Gastrocnemius medialis (tissue), 4 donors: ENCODE measurements at regions of chr4 and their contacts with region 1.

Region 1: DNA sequence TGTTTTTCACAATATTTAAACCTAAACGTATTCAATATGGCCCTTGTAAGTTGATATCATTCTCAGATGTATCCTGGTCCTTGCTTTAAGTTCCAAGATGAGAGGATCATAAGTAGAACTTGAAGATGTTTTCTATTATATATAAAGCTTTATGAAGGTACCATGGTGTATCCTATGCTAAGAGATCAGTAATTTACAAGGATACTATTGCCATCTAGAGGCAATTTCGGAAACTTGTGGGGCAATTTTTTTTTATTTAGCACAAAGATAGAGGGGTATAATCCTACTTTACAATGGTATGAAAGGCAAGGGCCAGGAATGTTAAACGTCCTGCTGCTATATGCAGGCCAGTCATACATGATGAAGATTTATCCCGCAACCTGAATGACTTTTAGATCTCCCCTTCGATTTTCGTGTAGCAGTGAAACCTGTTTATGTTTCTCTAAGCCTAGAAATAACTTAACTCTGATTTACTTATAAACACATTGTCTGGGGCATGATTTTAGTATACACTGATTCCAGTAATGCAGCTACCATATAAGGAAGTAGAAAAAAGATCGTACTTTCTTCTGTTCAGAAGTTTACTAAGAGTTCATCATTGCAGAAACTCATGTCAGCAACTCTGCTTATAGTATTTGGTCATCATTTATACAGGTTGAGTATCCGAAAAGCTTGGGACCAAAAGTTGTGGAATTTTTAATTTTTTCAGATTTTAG is 2.6 kb downstream of the SLC25A31 start:
- DNase-seq: no peak
- ATAC-seq: no peak
- H3K4me3 ChIP-seq: no peak overlapping the region
- H3K27ac ChIP-seq: no peak overlapping the region
- H3K4me1 ChIP-seq: no peaks in the 10 kb centered on the region
- H3K27me3 ChIP-seq: no peaks in the 10 kb centered on the region
- CTCF ChIP-seq: peak in 3 of 5 experiments; percentile 29 to 54 (median 41)
- POLR2A ChIP-seq: no peak

Region 2: DNA sequence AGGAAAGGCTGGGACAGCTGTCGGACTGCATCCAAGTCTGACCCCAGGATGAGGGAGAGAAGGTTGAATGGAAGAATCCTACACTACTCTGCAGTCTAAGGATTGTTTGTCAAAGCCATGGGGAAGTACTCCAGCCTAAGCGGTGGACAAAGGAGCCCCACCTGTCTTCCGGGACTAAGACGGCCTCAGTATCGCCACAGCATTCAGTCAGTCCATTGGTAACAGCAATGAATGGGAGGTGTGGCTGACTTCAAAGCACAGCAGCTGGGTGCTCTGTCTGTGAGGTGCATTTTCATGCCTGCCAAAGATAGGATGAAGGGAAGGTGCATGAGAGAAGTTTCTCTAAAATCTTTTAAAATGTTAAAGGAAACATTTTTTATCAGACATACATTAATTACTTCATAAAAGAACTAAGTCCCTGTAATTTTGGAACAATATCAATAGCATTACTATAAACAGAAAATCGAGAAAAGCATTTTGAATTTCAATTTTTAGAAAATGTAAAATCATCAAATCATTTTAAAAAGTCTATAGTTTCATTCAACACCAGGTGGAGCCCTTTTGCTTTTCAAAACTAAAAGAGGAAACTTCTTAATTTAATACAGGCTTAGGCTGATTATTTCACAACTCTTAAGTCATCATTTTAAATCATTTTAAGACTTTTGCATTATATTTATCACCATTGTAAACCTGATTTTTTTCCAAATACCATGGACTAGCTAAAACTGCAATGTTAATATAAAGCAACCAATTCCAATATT is 127.6 kb before region 1 on chr4:
- in situ Hi-C with region 1: loop called (anchors 5 to 25 kb)
- intact Hi-C with region 1: loop called (anchors 2 kb)
- DNase-seq: no peak
- ATAC-seq: no peak
- H3K4me3 ChIP-seq: no peak overlapping the region
- H3K27ac ChIP-seq: no peak overlapping the region
- H3K4me1 ChIP-seq: no peaks in the 10 kb centered on the region
- H3K27me3 ChIP-seq: peaks cover 0 to 5% (median 0%) of the 10 kb centered on the region in 3 donors
- CTCF ChIP-seq: peak in 4 of 5 experiments; percentile 18 to 48 (median 32)
- POLR2A ChIP-seq: no peak

Region 3: GRCh38 chr4:127622921-127623656 is 109.7 kb before region 1 on chr4:
- in situ Hi-C with region 1: loop called in 1 of 4 experiments (anchors 25 kb)
- intact Hi-C with region 1: no loop called
- DNase-seq: no peak
- ATAC-seq: peak; percentile 39 to 41
- H3K4me3 ChIP-seq: peak overlapping the region; percentile 50 to 60 (median 56)
- H3K27ac ChIP-seq: no peak overlapping the region
- H3K4me1 ChIP-seq: peaks cover 0 to 5% of the 10 kb centered on the region in 2 donors
- H3K27me3 ChIP-seq: peaks cover 12 to 31% (median 22%) of the 10 kb centered on the region in 3 donors
- CTCF ChIP-seq: no peak
- POLR2A ChIP-seq: no peak

Region 4: GRCh38 chr4:127634181-127634580 is 98.6 kb before region 1 on chr4:
- in situ Hi-C with region 1: no loop called
- intact Hi-C with region 1: no loop called
- DNase-seq: no peak
- ATAC-seq: no peak
- H3K4me3 ChIP-seq: no peak overlapping the region
- H3K27ac ChIP-seq: no peak overlapping the region
- H3K4me1 ChIP-seq: peaks cover 12 to 18% of the 10 kb centered on the region in 2 donors
- H3K27me3 ChIP-seq: no peaks in the 10 kb centered on the region
- CTCF ChIP-seq: no peak
- POLR2A ChIP-seq: no peak